ENCODE measurements at regions of chr16 and their contacts with region 1.

Region 1: DNA sequence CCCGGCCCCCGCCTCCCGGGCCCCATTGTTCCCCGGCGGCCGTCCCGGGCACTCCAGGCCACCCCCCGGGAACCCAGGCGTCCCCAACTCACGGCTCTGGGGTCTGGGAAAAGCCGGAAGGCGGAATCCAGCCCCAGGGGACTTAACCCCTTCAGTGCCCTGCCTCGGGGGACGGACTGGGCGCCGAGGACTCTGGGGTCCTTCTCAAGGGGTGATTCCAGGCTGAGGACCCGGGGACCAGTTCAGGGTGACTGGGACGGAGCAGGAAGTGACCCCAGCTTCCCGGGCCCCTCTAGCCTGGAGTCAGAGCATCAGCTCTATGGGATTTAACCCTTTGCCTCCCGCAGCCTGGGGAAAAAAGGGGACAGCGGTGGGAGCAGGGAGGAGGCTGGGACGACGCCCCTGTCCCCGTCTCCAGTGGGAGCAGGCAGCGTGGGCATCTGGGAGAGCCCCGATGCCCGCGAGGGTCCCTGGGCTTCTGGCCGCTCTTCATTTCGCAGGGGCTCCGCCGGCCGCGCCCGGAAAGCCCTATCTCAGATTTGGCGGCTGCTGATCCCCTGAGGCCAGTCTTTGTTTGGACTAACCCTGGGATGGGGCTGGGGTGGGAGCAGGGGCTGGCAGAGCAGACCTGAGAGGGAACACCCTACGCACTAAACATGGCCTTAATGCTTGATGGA is at the start of gene ZNF629:
- DNase-seq: peak; percentile 81 to 85
- ATAC-seq: peak; percentile 90
- H3K4me3 ChIP-seq: peak within 1 kb of the TSS; percentile 90 to 99
- H3K27ac ChIP-seq: peak within 1 kb of the TSS; percentile 59 to 78
- H3K4me1 ChIP-seq: no peaks in the 10 kb centered on the region
- H3K27me3 ChIP-seq: no peaks in the 10 kb centered on the region
- total RNA-seq, gene ZNF629: 11.8 to 13.4 TPM

Region 2: DNA sequence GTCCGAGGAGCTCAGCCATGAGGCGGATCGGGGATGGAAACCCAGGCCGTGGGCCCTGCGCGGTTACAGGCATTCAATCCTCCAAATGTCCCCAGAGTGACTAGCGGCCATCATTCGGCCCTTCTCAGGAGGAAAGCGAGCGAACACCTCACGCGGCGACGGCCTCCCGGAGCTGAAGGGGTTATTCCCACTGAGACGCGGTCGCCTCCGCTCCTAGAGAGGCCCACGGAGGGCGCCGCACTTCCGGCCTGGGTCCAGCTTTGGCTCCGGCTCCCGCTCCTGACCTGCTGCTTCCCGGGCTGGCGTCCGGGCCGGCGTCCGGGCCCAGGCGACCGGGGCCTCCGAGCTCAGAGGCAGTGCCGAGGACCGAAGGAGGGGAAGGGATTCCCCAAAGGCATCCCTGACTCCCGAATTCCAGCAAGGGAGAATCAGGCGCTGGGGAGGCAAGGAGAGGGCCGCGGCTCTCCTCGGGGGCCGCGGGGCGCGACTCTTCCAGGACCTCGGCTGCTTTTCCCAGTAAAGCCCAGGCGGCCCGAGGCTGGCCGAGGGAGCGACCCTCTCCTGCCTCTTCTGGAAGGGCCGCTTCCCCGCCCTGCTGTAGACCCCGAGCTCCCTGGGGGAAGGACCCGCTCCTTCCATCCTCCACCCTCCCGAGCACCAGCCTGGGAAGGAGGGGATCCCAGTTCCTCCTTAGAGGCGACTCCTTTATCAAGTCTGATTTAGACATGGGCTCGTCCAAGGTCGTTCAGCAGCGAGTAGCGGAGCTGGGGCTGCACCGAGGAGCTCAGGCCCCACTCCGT is 18.5 kb after region 1 on chr16:
- intact Hi-C with region 1: loop called (anchors 1 kb)
- DNase-seq: peak; percentile 94 to 95
- ATAC-seq: peak; percentile 99
- H3K4me3 ChIP-seq: peak overlapping the region; percentile 48 to 73
- H3K27ac ChIP-seq: peak overlapping the region; percentile 41 to 51
- H3K4me1 ChIP-seq: no peaks in the 10 kb centered on the region
- H3K27me3 ChIP-seq: no peaks in the 10 kb centered on the region

Region 3: GRCh38 chr16:30838876-30839471 is 51.9 kb after region 1 on chr16:
- intact Hi-C with region 1: no loop called
- DNase-seq: no peak
- ATAC-seq: no peak
- H3K4me3 ChIP-seq: no peak overlapping the region
- H3K27ac ChIP-seq: no peak overlapping the region
- H3K4me1 ChIP-seq: no peaks in the 10 kb centered on the region
- H3K27me3 ChIP-seq: no peaks in the 10 kb centered on the region

Region 4: GRCh38 chr16:30850246-30850645 is 63.2 kb after region 1 on chr16:
- intact Hi-C with region 1: no loop called
- DNase-seq: no peak
- ATAC-seq: no peak
- H3K4me3 ChIP-seq: no peak overlapping the region
- H3K27ac ChIP-seq: no peak overlapping the region
- H3K4me1 ChIP-seq: peaks cover 0 to 2% of the 10 kb centered on the region in 2 donors
- H3K27me3 ChIP-seq: no peaks in the 10 kb centered on the region